Esophagus muscularis mucosa (tissue), 4 donors: ENCODE measurements at regions of chr11 and their contacts with region 1.

Region 1: DNA sequence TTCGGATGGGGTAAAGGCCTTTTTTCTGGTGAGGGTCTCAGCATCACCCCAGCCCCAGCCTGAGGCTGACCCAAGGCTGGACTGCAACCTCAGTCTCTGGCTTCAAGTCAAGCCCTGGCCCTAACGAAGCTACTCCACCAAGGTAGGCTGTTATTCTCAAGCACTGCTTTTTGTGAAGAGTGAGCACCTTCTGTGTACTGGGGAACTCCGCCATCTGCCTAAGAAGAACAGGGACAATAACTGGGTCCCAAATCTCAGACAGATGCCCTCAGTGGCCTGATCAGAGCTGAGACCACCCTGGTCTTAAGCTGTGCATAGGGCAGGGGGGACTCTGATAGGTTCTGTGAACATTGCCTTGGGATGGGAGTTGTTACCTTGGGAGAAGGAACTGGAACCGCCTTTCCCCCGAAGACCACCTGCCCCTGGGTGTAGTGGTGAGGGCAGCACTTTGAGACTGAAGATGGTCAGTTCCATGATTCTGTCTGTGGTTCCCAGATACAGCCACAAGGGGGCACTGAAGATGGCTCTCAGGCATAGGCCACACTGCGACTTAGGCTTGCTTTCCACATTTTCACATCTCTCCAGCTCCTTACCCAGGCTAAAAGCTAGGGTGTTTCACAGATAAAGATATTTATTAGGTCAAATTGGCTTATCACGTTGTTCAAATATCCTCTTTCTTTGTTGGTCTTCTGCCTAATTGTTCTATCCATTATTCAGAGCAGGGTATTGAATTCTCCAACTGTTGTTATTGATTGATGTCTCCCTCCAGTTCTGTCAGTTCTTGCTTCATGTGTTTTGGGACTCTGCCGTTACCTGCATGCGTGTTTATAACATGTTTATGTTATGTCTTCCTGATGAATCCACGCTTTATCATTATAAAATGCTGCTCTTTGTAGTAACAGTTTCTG is 11.8 kb upstream of the UVRAG start:
- DNase-seq: peak; percentile 95
- H3K4me3 ChIP-seq: no peak overlapping the region
- H3K27ac ChIP-seq: no peak overlapping the region
- H3K4me1 ChIP-seq: peaks cover 0 to 9% (median 3%) of the 10 kb centered on the region in 4 donors
- H3K27me3 ChIP-seq: no peaks in the 10 kb centered on the region
- CTCF ChIP-seq: peak; percentile 91 to 92 (median 92)
- EP300 ChIP-seq: no peak
- POLR2A ChIP-seq: no peak

Region 2: DNA sequence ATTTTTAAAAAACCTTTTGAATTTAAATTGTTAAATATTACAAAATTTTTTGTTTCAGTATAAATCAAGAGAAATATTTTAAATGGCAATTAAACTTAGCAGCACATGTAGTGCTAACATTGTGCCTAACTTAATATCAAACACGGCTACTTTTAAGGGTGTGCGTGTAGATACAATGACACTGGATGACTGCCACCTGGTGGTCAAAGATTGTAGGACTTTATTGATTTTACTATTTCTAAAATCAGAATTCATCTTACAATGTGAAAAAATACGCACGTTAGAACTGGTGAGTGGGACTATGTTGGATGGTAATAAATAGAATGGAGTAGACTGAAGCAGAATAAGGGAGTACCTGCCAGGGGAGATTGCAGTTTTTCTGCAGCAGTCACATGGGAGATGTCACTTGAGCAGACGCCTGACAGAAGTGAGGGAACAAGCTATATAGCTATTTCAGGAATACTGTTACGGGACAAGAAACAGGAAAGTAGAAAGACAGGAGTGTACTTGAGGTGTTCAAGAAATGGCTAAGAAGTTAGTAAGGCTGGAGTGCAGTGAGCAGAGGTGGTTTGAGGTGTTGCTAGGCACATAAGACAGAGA is 64.7 kb after region 1 on chr11:
- intact Hi-C with region 1: loop called (anchors 2 kb)
- DNase-seq: no peak
- H3K4me3 ChIP-seq: no peak overlapping the region
- H3K27ac ChIP-seq: no peak overlapping the region
- H3K4me1 ChIP-seq: peaks cover 14 to 22% (median 18%) of the 10 kb centered on the region in 4 donors
- H3K27me3 ChIP-seq: no peaks in the 10 kb centered on the region
- CTCF ChIP-seq: peak; percentile 75 to 85 (median 84)
- EP300 ChIP-seq: no peak
- POLR2A ChIP-seq: no peak

Region 3: GRCh38 chr11:76152086-76152681 is 349.0 kb after region 1 on chr11:
- intact Hi-C with region 1: loop called (anchors 5 kb)
- DNase-seq: peak; percentile 96
- H3K4me3 ChIP-seq: peak overlapping the region; percentile 41 to 56 (median 48)
- H3K27ac ChIP-seq: no peak overlapping the region
- H3K4me1 ChIP-seq: peaks cover 7 to 22% (median 12%) of the 10 kb centered on the region in 4 donors
- H3K27me3 ChIP-seq: no peaks in the 10 kb centered on the region
- CTCF ChIP-seq: peak in 2 of 3 experiments; percentile 92 to 96
- EP300 ChIP-seq: no peak
- POLR2A ChIP-seq: no peak